Breast epithelium (tissue), 4 donors: ENCODE measurements at regions of chr9 and their contacts with region 1.

Region 1: GRCh38 chr9:25442526-25442925 is 235.7 kb downstream of the TUSC1 start:
- DNase-seq: no peak
- H3K4me3 ChIP-seq: no peak overlapping the region
- H3K27ac ChIP-seq: no peak overlapping the region
- H3K4me1 ChIP-seq: no peaks in the 10 kb centered on the region
- H3K27me3 ChIP-seq: no peaks in the 10 kb centered on the region
- CTCF ChIP-seq: no peak
- POLR2A ChIP-seq: no peak

Region 2: GRCh38 chr9:25366906-25367305 is 75.6 kb before region 1 on chr9:
- intact Hi-C with region 1: no loop called
- DNase-seq: no peak
- H3K4me3 ChIP-seq: no peak overlapping the region
- H3K27ac ChIP-seq: no peak overlapping the region
- H3K4me1 ChIP-seq: no peaks in the 10 kb centered on the region
- H3K27me3 ChIP-seq: no peaks in the 10 kb centered on the region
- CTCF ChIP-seq: no peak
- POLR2A ChIP-seq: no peak

Region 3: GRCh38 chr9:25427898-25428297 is 14.6 kb before region 1 on chr9:
- intact Hi-C with region 1: no loop called
- DNase-seq: no peak
- H3K4me3 ChIP-seq: no peak overlapping the region
- H3K27ac ChIP-seq: no peak overlapping the region
- H3K4me1 ChIP-seq: no peaks in the 10 kb centered on the region
- H3K27me3 ChIP-seq: no peaks in the 10 kb centered on the region
- CTCF ChIP-seq: no peak
- POLR2A ChIP-seq: no peak

Region 4: DNA sequence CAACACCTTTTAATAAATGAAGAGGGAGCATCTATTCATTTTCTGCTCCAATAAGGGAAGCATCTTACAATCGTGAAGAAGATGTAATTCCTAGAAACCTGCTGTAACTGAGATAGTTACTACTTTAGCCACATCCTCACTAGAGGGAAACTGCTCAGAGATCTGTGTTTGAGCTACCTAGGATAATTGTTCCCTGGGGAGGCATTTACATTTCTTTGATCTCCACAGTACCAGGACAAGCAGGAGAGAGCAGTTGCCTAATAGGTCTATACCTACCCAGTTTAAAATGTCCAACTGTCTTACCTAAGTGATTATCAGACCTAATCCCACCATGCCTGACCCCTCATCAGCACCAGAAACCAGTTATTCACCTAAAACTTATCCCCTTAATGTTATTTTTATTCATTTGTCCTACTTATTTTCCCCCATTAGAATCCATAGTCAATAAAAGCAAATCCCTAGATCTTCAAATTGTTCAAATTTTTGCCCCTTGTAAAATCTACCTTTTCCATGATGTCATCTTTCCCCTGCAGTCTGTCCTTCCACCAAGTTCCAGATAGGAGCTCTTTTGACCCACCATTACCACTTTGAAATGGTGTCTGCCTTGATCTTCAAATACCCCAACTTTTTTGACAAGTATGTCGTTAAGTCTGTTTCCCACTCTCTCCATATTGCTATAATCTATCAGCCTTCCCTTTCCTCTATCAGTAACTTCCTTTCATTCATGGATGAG is 39.0 kb after region 1 on chr9:
- intact Hi-C with region 1: loop called (anchors 2 kb)
- DNase-seq: no peak
- H3K4me3 ChIP-seq: no peak overlapping the region
- H3K27ac ChIP-seq: no peak overlapping the region
- H3K4me1 ChIP-seq: no peaks in the 10 kb centered on the region
- H3K27me3 ChIP-seq: no peaks in the 10 kb centered on the region
- CTCF ChIP-seq: no peak
- POLR2A ChIP-seq: no peak